Esophagus muscularis mucosa (tissue), 4 donors: ENCODE measurements at regions of chr14 and their contacts with region 1.

Region 1: DNA sequence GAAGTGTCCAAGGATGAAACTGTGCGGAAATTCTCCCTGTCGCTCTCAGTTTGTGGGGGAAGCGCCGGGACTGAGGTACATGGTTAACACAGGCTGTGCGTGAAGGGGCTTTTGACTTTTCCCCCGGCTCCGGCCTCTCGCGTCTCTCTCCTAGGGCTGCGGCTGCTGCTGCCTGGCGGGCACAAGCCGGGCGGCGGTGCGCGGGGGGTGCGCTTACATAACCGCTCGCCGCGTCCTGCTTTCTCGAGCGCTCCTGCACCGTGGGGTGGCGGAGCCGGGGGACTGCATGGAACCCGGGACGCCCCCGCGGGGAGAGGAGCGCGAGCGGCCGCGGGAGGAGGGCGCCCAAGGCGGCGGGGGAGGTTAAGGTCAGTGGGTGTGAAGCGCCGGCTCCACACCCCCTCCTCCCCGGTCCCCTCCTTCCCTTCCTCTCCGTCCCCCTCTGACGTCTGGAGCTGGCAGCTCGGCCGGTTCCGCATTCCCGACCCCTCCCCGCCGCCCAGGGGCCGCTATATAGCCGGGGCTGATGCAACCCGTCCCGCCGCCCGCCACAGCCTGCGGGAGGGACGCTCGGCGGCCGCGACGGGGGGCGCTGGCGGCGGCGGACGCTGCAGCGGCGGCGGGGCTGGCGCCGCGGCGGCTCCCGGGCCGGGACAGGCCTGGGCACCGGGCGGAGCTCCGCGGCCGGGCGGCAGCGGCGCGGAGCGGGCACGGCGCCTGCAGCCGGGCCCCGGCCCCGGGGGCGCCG is at the start of gene JDP2:
- DNase-seq: peak; percentile 96
- H3K4me3 ChIP-seq: peak within 1 kb of the TSS; percentile 79 to 87 (median 83)
- H3K27ac ChIP-seq: peak within 1 kb of the TSS; percentile 89 to 96 (median 95)
- H3K4me1 ChIP-seq: peaks cover 41 to 63% (median 53%) of the 10 kb centered on the region in 4 donors
- H3K27me3 ChIP-seq: no peaks in the 10 kb centered on the region
- CTCF ChIP-seq: peak in 2 of 3 experiments; percentile 10 to 46
- EP300 ChIP-seq: no peak
- POLR2A ChIP-seq: peak; percentile 57
- total RNA-seq, gene JDP2: 50.5 to 94.5 (median 78.3) TPM

Region 2: GRCh38 chr14:74697543-74697942 is 730.1 kb before region 1 on chr14:
- intact Hi-C with region 1: no loop called
- DNase-seq: no peak
- H3K4me3 ChIP-seq: no peak overlapping the region
- H3K27ac ChIP-seq: no peak overlapping the region
- H3K4me1 ChIP-seq: peaks cover 0 to 7% (median 4%) of the 10 kb centered on the region in 4 donors
- H3K27me3 ChIP-seq: no peaks in the 10 kb centered on the region
- CTCF ChIP-seq: no peak
- EP300 ChIP-seq: no peak
- POLR2A ChIP-seq: no peak

Region 3: GRCh38 chr14:75063407-75064213 is 364.0 kb before region 1 on chr14 and contains the start of gene ACYP1:
- intact Hi-C with region 1: no loop called
- DNase-seq: peak; percentile 98
- H3K4me3 ChIP-seq: peak within 1 kb of the TSS; percentile 82 to 90 (median 86)
- H3K27ac ChIP-seq: peak within 1 kb of the TSS; percentile 75 to 87 (median 81)
- H3K4me1 ChIP-seq: peaks cover 24 to 39% (median 32%) of the 10 kb centered on the region in 4 donors
- H3K27me3 ChIP-seq: no peaks in the 10 kb centered on the region
- CTCF ChIP-seq: no peak
- EP300 ChIP-seq: no peak
- POLR2A ChIP-seq: no peak
- total RNA-seq, gene ACYP1: 9.1 to 20.3 (median 16.9) TPM

Region 4: DNA sequence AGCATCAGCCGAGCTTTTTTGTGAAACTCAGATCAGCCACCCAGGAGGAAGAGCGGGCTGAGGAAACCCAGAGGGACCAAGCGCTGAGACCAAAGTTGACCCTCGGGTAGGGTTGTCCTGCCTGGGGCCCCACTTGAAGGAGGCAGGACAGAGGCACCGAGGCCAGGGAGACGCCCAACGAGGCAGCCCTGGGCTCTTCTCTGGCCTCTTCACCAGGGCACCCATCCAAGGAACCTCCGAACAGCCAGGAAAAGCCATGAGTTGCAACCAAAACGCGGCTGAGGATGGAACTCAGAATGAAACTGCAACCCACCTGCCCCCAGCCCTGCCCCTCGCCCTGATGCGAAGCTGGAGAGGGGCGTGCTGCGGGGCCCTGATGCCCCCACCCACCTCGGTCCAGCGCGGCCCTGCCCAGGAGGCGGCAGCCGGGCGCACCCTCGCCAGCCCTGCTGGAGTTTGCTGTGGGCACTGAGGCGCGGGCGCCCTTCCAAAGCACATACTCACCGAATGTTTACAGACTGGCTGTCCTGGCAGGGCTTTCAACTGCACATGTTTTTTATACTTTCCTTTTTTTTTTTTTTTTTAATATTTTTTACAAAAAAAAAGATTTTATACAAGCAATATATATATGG is 42.1 kb after region 1 on chr14:
- intact Hi-C with region 1: loop called (anchors 5 kb)
- DNase-seq: no peak
- H3K4me3 ChIP-seq: no peak overlapping the region
- H3K27ac ChIP-seq: peak overlapping the region; percentile 59 to 74 (median 67)
- H3K4me1 ChIP-seq: peaks cover 21 to 68% (median 57%) of the 10 kb centered on the region in 4 donors
- H3K27me3 ChIP-seq: no peaks in the 10 kb centered on the region
- CTCF ChIP-seq: no peak
- EP300 ChIP-seq: no peak
- POLR2A ChIP-seq: no peak

Region 5: DNA sequence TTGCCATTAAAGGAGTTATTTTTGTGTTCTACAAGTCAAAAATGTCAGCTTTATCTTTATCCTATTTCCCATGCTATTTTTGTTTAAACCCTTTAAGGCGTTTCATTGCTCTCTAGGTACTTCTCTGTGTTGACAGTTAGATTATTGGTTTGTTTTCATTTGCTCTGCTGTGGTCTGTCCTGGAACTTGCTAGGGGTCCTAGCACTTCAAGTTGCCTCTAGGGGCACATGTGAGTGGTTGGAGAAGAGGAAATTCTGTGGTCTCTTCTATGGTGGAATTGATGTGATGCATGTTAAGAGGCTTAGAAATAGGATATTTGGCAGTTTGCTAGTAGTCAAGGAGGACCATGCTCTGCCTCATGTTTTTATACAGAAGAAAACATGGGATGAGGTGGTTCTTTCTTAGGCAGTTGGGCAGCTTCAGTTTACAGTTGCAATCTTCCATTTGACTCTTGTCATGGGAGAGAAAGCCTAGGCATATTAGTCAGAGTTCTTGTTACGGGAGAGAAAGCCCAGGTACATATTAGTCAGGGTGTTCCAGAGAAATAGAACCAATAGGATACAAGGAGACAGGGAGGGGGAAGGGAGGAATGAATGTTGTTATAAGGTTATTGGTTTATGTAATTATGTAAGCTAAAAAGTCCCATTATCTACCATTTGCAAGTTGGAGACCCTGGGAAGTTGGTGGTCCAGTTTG is 247.8 kb after region 1 on chr14:
- intact Hi-C with region 1: no loop called
- DNase-seq: no peak
- H3K4me3 ChIP-seq: no peak overlapping the region
- H3K27ac ChIP-seq: no peak overlapping the region
- H3K4me1 ChIP-seq: no peaks in the 10 kb centered on the region
- H3K27me3 ChIP-seq: no peaks in the 10 kb centered on the region
- CTCF ChIP-seq: no peak
- EP300 ChIP-seq: no peak
- POLR2A ChIP-seq: no peak

Region 6: DNA sequence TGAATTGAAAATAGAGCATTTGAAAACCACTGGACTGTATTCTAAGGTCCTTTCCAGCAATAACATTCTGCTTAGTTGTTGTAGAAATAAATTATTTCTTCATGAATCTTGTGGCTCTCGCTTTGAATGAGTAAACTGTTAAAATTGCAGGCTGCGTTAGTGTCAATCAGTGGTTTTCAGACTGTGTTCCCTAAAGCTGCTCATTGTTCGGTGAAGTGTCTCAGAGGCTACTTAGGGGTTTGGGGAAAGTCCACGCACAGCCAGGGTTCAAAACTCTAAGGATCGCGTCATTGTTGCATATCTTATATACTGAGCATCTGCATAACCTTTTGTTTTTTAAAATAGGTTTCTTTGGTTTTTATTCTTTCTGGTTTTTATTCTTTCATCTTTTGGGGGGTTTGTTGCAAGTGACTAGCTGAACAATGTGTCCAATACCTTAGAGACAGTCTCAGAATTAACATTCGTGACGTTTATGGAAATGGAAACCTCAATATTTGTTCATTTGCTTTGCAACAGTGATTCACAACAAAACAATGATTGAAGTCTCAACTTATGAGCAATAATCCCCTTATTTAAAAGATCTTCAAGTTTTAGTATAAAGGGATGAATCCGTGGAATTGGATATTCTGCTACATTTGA is 341.5 kb after region 1 on chr14:
- intact Hi-C with region 1: no loop called
- DNase-seq: no peak
- H3K4me3 ChIP-seq: no peak overlapping the region
- H3K27ac ChIP-seq: no peak overlapping the region
- H3K4me1 ChIP-seq: peaks cover 0 to 18% (median 2%) of the 10 kb centered on the region in 4 donors
- H3K27me3 ChIP-seq: no peaks in the 10 kb centered on the region
- CTCF ChIP-seq: no peak
- EP300 ChIP-seq: no peak
- POLR2A ChIP-seq: no peak